Panc1 (cell line): ENCODE measurements at regions of chr11 and their contacts with region 1.

Region 1: DNA sequence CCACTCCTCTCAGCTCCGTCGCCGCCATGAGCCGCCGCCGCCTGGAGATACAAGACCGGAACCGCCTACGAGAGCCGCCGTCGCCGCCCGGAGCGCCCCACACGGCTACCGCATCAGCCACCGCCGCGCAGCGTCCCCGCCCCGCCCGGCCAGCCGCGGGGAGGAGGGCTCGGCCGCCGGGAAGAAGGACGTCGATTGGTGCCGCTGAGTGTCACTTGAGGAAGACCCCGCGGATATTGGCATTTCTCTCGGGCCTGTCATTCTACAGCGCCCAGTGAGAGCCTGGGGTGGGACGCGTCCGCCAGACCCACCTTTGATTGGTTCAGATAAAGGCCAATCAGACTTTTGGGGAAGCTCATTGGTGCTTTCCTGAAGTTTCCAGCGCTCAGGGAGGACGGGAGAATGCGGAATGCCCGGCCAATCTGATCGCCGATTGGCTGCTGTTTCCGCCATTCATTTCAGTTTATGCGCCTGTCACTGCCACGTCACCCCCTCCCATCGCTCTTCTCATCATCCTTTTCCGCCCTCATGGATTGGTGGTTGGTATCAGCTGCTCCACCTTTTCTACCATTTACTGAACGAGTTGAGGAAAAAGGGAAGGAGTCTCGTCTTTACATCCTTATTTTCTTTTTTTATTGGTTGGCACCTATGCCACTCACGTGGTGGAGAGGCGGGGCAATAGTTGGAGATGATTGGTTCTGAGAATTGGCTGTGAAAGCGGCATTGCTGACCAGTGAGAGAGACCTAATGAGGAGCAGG is at the start of gene OSBP:
- DNase-seq: peak; percentile 100
- ATAC-seq: peak; percentile 95
- H3K4me3 ChIP-seq: peak within 1 kb of the TSS; percentile 96 to 98
- H3K27ac ChIP-seq: peak within 1 kb of the TSS; percentile 88
- H3K4me1 ChIP-seq: peaks cover 32% of the 10 kb centered on the region
- H3K27me3 ChIP-seq: no peaks in the 10 kb centered on the region
- CTCF ChIP-seq: no peak
- total RNA-seq, gene OSBP: 35.3 TPM

Region 2: DNA sequence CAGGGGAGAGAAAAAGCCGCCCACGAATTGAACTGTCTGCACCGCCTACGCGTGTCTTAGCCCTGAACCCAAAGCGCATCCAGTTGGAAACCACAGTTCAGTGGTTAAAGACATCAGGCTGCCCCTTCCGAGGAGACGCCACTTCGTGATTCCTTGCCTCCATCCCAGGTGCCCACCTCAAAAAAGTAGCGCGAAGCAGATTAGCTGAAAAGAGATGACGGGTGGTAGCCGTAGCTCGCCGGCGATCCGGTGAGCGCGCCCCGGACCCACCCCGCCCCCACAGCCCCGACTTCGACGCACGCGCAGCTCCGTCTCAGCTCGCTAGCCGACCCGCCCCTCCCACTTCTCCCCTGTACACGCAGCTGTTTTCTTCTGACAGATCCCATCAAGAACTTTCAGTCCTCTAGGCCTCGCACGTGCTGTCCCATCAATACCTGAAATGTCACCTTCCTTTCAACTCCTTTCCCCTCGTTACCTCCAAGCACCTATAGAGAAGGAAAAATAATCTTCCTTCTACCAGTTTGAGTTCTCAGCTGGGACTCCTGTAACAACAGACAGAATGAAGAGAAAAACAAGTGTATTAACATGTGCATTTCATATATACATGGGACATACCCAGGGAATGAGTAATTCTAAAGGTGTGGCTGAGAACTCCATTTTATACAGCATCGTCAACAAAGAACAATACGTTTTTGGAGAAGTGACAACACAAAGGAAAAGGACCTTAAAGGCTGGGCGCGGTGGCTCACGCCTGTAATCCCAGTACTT is 54.9 kb before region 1 on chr11:
- CTCF ChIA-PET with region 1: no interaction called
- POLR2A ChIA-PET with region 1: interaction called, 3 read pairs
- in situ Hi-C with region 1: no loop called
- intact Hi-C with region 1: loop called (anchors 5 kb)
- DNase-seq: no peak
- ATAC-seq: peak; percentile 61
- H3K4me3 ChIP-seq: peak overlapping the region; percentile 65 to 84
- H3K27ac ChIP-seq: peak overlapping the region; percentile 62
- H3K4me1 ChIP-seq: peaks cover 3% of the 10 kb centered on the region
- H3K27me3 ChIP-seq: no peaks in the 10 kb centered on the region
- CTCF ChIP-seq: no peak